CD8-positive, alpha-beta T cell (primary cell): ENCODE measurements at regions of chr12 and their contacts with region 1.

Region 1: GRCh38 chr12:105107494-105108371 is at the start of gene WASHC4:
- DNase-seq: peak; percentile 86 to 95 (median 93)
- ATAC-seq: peak; percentile 94
- H3K4me3 ChIP-seq: peak within 1 kb of the TSS; percentile 81 to 96
- H3K4me3 Mint-ChIP-seq: peak within 1 kb of the TSS; percentile 96
- H3K27ac ChIP-seq: peak within 1 kb of the TSS; percentile 91 to 92
- H3K27ac Mint-ChIP-seq: peak within 1 kb of the TSS; percentile 97
- H3K4me1 ChIP-seq: peaks cover 25% of the 10 kb centered on the region
- H3K4me1 Mint-ChIP-seq: peaks cover 37% of the 10 kb centered on the region
- H3K27me3 ChIP-seq: peaks cover 0 to 3% of the 10 kb centered on the region in 2 experiments
- H3K27me3 Mint-ChIP-seq: peaks cover 14% of the 10 kb centered on the region
- CTCF ChIP-seq: no peak
- total RNA-seq, gene WASHC4: 26.1 to 26.9 TPM

Region 2: DNA sequence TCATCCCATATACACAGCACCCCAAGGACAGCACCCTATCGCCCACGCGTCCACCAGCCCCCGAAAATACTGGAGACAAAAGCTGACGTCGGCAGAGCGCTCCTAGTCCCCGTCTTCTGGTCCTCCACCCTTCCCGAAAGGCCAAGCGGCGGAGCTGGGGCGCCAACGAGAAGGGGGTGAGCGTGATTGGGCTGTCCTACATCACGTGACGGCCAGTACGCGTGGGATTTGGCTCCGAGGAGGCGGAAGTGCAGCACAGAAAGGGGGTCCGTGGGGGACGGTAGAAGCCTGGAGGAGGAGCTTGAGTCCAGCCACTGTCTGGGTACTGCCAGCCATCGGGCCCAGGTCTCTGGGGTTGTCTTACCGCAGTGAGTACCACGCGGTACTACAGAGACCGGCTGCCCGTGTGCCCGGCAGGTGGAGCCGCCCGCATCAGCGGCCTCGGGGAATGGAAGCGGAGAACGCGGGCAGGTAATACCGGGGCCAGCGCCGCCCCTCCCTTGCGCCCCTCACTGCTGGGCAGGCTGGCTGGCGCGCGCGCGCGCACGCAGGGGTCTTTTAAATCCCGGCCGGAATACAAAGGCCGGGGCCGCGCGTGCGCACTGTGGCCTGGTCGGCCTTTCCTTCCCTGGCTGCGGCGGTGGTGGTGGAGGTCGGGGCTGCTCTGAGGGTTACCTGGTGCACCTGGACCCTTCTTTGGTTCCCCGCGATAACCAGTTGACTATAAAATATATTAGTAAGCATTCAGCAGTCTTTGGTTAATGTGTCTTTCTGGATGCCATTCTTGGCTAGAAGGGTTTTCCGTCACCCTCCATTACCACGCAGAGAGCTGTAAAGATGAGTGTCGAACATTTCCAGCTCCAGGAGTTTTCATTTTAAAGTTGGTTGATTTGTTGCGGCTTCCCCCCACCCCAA is 1141.9 kb before region 1 on chr12 and contains the start of gene TDG:
- CTCF ChIA-PET with region 1: no interaction called
- POLR2A ChIA-PET with region 1: no interaction called
- intact Hi-C with region 1: loop called (anchors 1 to 5 kb)
- DNase-seq: peak; percentile 94 to 99 (median 97)
- ATAC-seq: peak; percentile 92
- H3K4me3 ChIP-seq: peak within 1 kb of the TSS; percentile 54 to 83
- H3K4me3 Mint-ChIP-seq: peak within 1 kb of the TSS; percentile 96
- H3K27ac ChIP-seq: peak within 1 kb of the TSS; percentile 79 to 92
- H3K27ac Mint-ChIP-seq: peak within 1 kb of the TSS; percentile 99
- H3K4me1 ChIP-seq: peaks cover 41% of the 10 kb centered on the region
- H3K4me1 Mint-ChIP-seq: peaks cover 59% of the 10 kb centered on the region
- H3K27me3 ChIP-seq: no peaks in the 10 kb centered on the region
- H3K27me3 Mint-ChIP-seq: no peaks in the 10 kb centered on the region
- CTCF ChIP-seq: no peak
- total RNA-seq, gene TDG: 30.5 to 36.8 TPM

Region 3: DNA sequence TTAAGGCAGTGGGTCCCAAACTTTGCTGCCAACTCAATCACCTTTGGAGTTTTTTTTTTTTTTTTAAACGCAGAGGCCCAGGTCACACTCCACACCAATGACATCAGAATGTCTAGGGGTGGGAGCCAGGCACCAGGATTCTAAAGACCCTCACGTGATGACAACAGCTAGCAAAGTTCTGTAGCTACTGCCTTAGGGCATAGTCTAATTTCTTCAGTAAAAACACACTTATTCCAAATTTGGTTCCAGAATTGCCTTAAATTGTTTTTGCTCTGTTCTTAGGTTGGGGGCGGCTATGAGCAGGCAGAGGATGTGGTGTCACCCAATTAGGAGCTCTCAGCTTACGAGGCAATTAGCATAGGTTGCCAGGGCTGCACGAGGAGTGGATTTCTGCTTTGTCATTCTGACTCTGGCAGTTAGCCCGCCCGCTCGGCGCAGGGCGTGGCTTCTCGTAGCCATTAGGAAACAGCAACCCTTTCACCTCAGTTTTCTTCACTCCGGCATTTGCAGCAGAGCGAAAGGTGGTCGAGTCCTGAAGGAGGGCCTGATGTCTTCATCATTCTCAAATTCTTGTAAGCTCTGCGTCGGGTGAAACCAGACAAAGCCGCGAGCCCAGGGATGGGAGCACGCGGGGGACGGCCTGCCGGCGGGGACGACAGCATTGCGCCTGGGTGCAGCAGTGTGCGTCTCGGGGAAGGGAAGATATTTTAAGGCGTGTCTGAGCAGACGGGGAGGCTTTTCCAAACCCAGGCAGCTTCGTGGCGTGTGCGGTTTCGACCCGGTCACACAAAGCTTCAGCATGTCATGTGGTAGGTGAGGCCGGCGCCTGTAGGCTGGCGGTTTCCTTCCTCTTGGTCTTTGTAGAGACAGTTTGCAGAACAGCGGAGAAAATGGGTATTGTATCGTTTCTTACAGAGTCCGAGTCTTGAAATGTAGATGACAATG is 820.9 kb before region 1 on chr12:
- CTCF ChIA-PET with region 1: no interaction called
- POLR2A ChIA-PET with region 1: interaction called, 3 read pairs
- intact Hi-C with region 1: loop called (anchors 1 to 2 kb)
- DNase-seq: peak; percentile 75 to 95 (median 88)
- ATAC-seq: peak; percentile 87
- H3K4me3 ChIP-seq: peak overlapping the region; percentile 80 to 86
- H3K4me3 Mint-ChIP-seq: peak overlapping the region; percentile 97
- H3K27ac ChIP-seq: peak overlapping the region; percentile 64 to 90
- H3K27ac Mint-ChIP-seq: peak overlapping the region; percentile 96
- H3K4me1 ChIP-seq: peaks cover 24% of the 10 kb centered on the region
- H3K4me1 Mint-ChIP-seq: peaks cover 35% of the 10 kb centered on the region
- H3K27me3 ChIP-seq: no peaks in the 10 kb centered on the region
- H3K27me3 Mint-ChIP-seq: no peaks in the 10 kb centered on the region
- CTCF ChIP-seq: no peak

Region 4: GRCh38 chr12:104456417-104456949 is 651.2 kb before region 1 on chr12 and contains the start of gene CHST11:
- CTCF ChIA-PET with region 1: no interaction called
- POLR2A ChIA-PET with region 1: no interaction called
- intact Hi-C with region 1: loop called in 1 of 2 experiments (anchors 5 kb)
- DNase-seq: peak; percentile 40 to 88 (median 72)
- ATAC-seq: peak; percentile 64
- H3K4me3 ChIP-seq: peak within 1 kb of the TSS; percentile 88 to 97
- H3K4me3 Mint-ChIP-seq: peak within 1 kb of the TSS; percentile 99
- H3K27ac ChIP-seq: peak within 1 kb of the TSS; percentile 70 to 82
- H3K27ac Mint-ChIP-seq: peak within 1 kb of the TSS; percentile 96
- H3K4me1 ChIP-seq: peaks cover 39% of the 10 kb centered on the region
- H3K4me1 Mint-ChIP-seq: peaks cover 42% of the 10 kb centered on the region
- H3K27me3 ChIP-seq: no peaks in the 10 kb centered on the region
- H3K27me3 Mint-ChIP-seq: no peaks in the 10 kb centered on the region
- CTCF ChIP-seq: no peak
- total RNA-seq, gene CHST11: 29.1 to 35.5 TPM

Region 5: GRCh38 chr12:105235732-105236476 is 128.2 kb after region 1 on chr12 and contains the start of gene APPL2:
- CTCF ChIA-PET with region 1: no interaction called
- POLR2A ChIA-PET with region 1: no interaction called
- intact Hi-C with region 1: loop called (anchors 1 to 5 kb)
- DNase-seq: peak; percentile 62 to 91 (median 82)
- ATAC-seq: peak; percentile 73
- H3K4me3 ChIP-seq: peak within 1 kb of the TSS; percentile 75 to 77
- H3K4me3 Mint-ChIP-seq: peak within 1 kb of the TSS; percentile 93
- H3K27ac ChIP-seq: peak within 1 kb of the TSS; percentile 79 to 87
- H3K27ac Mint-ChIP-seq: peak within 1 kb of the TSS; percentile 97
- H3K4me1 ChIP-seq: peaks cover 36% of the 10 kb centered on the region
- H3K4me1 Mint-ChIP-seq: peaks cover 51% of the 10 kb centered on the region
- H3K27me3 ChIP-seq: no peaks in the 10 kb centered on the region
- H3K27me3 Mint-ChIP-seq: no peaks in the 10 kb centered on the region
- CTCF ChIP-seq: no peak
- total RNA-seq, gene APPL2: 53.1 to 60.6 TPM